Common myeloid progenitor, CD34-positive (primary cell): ENCODE measurements at regions of chr16 and their contacts with region 1.

Region 1: DNA sequence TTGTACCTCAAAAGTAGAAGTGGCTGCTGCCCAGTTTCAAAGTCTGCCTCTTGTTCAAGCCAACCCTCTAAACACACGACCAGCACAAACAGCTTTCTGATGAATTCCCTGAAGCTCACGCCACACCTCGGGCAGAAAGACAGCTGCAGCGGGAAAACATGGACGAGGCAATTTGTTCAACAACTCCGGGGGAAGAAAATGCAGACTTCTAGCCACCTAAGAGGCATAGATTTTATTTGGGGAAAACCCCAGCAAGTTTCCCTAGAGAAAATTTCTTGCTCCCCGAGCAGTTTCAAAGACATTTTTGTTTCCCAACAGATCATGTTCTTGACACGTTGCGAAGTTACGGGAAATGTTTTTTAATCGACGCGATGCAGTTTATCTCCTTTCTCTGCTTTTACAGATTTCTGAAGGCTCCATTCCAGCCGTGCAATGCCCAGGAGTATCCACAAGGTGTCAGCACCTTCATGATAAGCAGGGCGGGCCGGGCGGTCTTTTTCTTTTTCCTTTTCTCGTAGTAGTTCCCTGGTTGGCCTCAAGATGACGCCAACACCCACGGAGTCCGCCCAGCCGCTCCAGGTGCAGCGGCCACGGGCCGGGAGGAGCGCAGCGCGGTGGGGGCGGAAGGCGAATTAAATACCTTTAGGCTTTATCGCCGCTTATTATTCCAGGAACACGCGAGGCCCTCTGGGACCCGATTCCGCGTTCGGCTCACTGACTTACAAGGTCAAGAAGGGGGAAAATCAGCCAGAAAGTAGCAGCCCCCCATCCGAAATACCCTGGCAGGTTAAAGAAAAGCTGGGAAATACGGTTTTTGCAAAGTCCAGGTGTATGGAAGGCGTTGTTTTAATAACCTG is 2.9 kb upstream of the FOXC2 start:
- DNase-seq: peak; percentile 85 to 91 (median 86)
- H3K4me3 ChIP-seq: peak overlapping the region in 1 of 7 experiments; percentile 8
- H3K27ac ChIP-seq: no peak overlapping the region
- H3K4me1 ChIP-seq: peaks cover 0 to 27% (median 11%) of the 10 kb centered on the region in 4 experiments
- H3K27me3 ChIP-seq: peaks cover 12 to 73% (median 33%) of the 10 kb centered on the region in 5 experiments

Region 2: GRCh38 chr16:87062569-87063442 is 499.1 kb after region 1 on chr16:
- CTCF ChIA-PET with region 1: interaction called, 20 read pairs
- POLR2A ChIA-PET with region 1: no interaction called
- DNase-seq: peak; percentile 74 to 84 (median 80)
- H3K4me3 ChIP-seq: peak overlapping the region in 2 of 7 experiments; percentile 37 to 46
- H3K27ac ChIP-seq: no peak overlapping the region
- H3K4me1 ChIP-seq: peaks cover 0 to 31% (median 20%) of the 10 kb centered on the region in 4 experiments
- H3K27me3 ChIP-seq: peaks cover 0 to 40% (median 0%) of the 10 kb centered on the region in 5 experiments

Region 3: GRCh38 chr16:87278191-87279095 is 714.7 kb after region 1 on chr16:
- CTCF ChIA-PET with region 1: interaction called, 12 read pairs
- POLR2A ChIA-PET with region 1: no interaction called
- DNase-seq: peak; percentile 68 to 75 (median 70)
- H3K4me3 ChIP-seq: no peak overlapping the region
- H3K27ac ChIP-seq: no peak overlapping the region
- H3K4me1 ChIP-seq: peaks cover 3 to 17% (median 14%) of the 10 kb centered on the region in 4 experiments
- H3K27me3 ChIP-seq: peaks cover 0 to 10% (median 0%) of the 10 kb centered on the region in 5 experiments